Endothelial cell of umbilical vein (primary cell): ENCODE measurements at regions of chr12 and their contacts with region 1.

Region 1: DNA sequence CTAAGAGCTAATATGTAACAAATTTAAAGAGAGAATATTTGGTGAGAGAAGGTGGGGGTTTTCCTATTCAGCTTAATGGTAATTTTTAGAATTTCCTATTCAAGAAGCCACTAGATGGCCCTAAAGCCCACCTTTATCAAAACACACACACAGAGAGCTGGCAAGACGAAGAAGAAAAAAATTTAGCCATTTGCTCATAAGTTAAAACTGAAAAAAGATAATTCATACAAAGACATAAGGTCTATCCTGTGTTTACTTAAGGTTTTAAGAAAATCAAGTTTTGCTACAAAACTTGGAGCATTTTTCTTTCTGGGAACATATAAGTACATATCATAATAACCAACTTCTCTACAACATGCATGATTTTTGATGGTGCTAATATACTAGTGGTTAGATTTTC is 46.8 kb upstream of the PCED1B start:
- DNase-seq: peak; percentile 74
- H3K4me3 ChIP-seq: no peak overlapping the region
- H3K27ac ChIP-seq: no peak overlapping the region
- H3K4me1 ChIP-seq: no peaks in the 10 kb centered on the region
- H3K27me3 ChIP-seq: no peaks in the 10 kb centered on the region
- CTCF ChIP-seq: peak; percentile 17 to 25
- POLR2A ChIP-seq: no peak

Region 2: GRCh38 chr12:46915082-46915481 is 117.6 kb before region 1 on chr12:
- CTCF ChIA-PET with region 1: no interaction called
- POLR2A ChIA-PET with region 1: no interaction called
- dilution Hi-C with region 1: no loop called
- intact Hi-C with region 1: no loop called
- DNase-seq: no peak
- H3K4me3 ChIP-seq: no peak overlapping the region
- H3K27ac ChIP-seq: no peak overlapping the region
- H3K4me1 ChIP-seq: no peaks in the 10 kb centered on the region
- H3K27me3 ChIP-seq: peaks cover 2 to 4% of the 10 kb centered on the region in 2 experiments
- CTCF ChIP-seq: no peak
- POLR2A ChIP-seq: no peak

Region 3: DNA sequence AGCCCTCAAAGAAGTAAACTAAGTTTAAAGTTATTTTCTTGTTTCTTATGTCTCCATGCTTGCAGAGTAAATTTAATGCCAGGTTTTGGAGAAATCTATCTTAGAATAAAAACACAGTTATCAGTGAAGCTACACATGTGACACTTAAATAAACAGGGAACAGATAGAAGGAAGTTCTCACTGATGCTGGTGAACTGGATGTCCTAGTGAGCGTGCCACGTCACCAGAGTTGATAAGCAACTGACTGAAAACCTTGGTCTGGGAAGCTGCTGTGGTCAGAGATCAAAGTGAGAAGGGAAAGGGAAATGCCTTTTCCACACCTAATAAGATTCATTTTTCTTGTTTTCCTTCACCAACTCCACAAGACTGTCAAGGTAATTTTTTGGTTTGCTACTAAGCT is 28.0 kb before region 1 on chr12:
- CTCF ChIA-PET with region 1: no interaction called
- POLR2A ChIA-PET with region 1: no interaction called
- dilution Hi-C with region 1: no loop called
- intact Hi-C with region 1: no loop called
- DNase-seq: no peak
- H3K4me3 ChIP-seq: no peak overlapping the region
- H3K27ac ChIP-seq: no peak overlapping the region
- H3K4me1 ChIP-seq: no peaks in the 10 kb centered on the region
- H3K27me3 ChIP-seq: peaks cover 0 to 4% of the 10 kb centered on the region in 2 experiments
- CTCF ChIP-seq: no peak
- POLR2A ChIP-seq: no peak

Region 4: GRCh38 chr12:47071241-47071852 is 38.7 kb after region 1 on chr12:
- CTCF ChIA-PET with region 1: interaction called, 31 read pairs
- POLR2A ChIA-PET with region 1: no interaction called
- dilution Hi-C with region 1: no loop called
- intact Hi-C with region 1: no loop called
- DNase-seq: no peak
- H3K4me3 ChIP-seq: no peak overlapping the region
- H3K27ac ChIP-seq: no peak overlapping the region
- H3K4me1 ChIP-seq: no peaks in the 10 kb centered on the region
- H3K27me3 ChIP-seq: no peaks in the 10 kb centered on the region
- CTCF ChIP-seq: peak; percentile 26 to 45
- POLR2A ChIP-seq: no peak

Region 5: GRCh38 chr12:47079468-47079980 is 46.9 kb after region 1 on chr12 and contains the starts of genes AMIGO2 and PCED1B:
- CTCF ChIA-PET with region 1: interaction called, 31 read pairs
- POLR2A ChIA-PET with region 1: no interaction called
- dilution Hi-C with region 1: no loop called
- intact Hi-C with region 1: no loop called
- DNase-seq: peak; percentile 67
- H3K4me3 ChIP-seq: peak within 1 kb of the TSS; percentile 65 to 91 (median 78)
- H3K27ac ChIP-seq: peak within 1 kb of the TSS; percentile 97
- H3K4me1 ChIP-seq: peaks cover 13% of the 10 kb centered on the region
- H3K27me3 ChIP-seq: no peaks in the 10 kb centered on the region
- CTCF ChIP-seq: peak in 1 of 2 donors; percentile 18
- POLR2A ChIP-seq: no peak
- total RNA-seq, gene AMIGO2: 7.5 and 8.7 TPM in 2 replicates
- total RNA-seq, gene PCED1B: 1.5 and 2.6 TPM in 2 replicates

Region 6: DNA sequence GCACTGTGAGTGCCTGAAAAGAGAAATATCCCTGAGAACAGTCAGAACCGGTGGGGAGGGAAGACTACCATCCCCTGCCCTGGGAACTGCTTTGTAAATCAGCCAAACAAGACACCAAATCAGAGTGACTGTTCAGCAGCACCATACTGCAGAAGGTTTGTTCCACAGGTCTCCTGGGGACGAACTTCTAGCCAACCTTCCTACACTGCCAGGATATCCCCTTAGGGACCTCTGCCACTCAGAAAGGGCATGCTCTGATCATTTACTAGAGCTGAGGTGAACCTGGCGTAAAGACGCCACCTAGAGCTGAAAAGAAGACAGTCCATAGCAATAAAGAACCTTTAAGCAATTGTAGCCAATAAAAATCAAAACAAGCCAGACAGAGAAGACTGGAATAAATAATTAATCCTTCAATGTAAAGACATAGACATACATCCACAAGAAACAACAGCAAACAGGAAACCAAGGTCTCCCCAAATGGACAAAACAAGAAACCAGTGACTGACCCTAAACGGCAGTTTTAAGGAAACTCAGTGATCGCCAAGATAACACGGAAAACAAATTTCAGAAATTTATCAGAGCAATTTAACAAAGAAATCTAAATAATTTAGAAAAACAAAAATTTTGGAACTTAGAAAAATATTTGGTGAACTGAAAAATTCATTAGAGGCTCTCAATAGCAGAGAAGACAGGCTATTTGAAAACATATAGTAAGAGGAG is 275.2 kb after region 1 on chr12:
- CTCF ChIA-PET with region 1: interaction called, 83 read pairs
- POLR2A ChIA-PET with region 1: no interaction called
- dilution Hi-C with region 1: no loop called
- intact Hi-C with region 1: loop called (anchors 1 kb)
- DNase-seq: peak; percentile 66
- H3K4me3 ChIP-seq: no peak overlapping the region
- H3K27ac ChIP-seq: no peak overlapping the region
- H3K4me1 ChIP-seq: no peaks in the 10 kb centered on the region
- H3K27me3 ChIP-seq: no peaks in the 10 kb centered on the region
- CTCF ChIP-seq: peak; percentile 47 to 57
- POLR2A ChIP-seq: no peak

Region 7: GRCh38 chr12:47547085-47547484 is 514.4 kb after region 1 on chr12:
- CTCF ChIA-PET with region 1: interaction called, 12 read pairs
- POLR2A ChIA-PET with region 1: no interaction called
- dilution Hi-C with region 1: no loop called
- intact Hi-C with region 1: loop called (anchors 10 kb)
- DNase-seq: peak; percentile 69
- H3K4me3 ChIP-seq: no peak overlapping the region
- H3K27ac ChIP-seq: no peak overlapping the region
- H3K4me1 ChIP-seq: no peaks in the 10 kb centered on the region
- H3K27me3 ChIP-seq: peaks cover 3 to 4% of the 10 kb centered on the region in 2 experiments
- CTCF ChIP-seq: peak; percentile 40 to 46
- POLR2A ChIP-seq: no peak

Region 8: DNA sequence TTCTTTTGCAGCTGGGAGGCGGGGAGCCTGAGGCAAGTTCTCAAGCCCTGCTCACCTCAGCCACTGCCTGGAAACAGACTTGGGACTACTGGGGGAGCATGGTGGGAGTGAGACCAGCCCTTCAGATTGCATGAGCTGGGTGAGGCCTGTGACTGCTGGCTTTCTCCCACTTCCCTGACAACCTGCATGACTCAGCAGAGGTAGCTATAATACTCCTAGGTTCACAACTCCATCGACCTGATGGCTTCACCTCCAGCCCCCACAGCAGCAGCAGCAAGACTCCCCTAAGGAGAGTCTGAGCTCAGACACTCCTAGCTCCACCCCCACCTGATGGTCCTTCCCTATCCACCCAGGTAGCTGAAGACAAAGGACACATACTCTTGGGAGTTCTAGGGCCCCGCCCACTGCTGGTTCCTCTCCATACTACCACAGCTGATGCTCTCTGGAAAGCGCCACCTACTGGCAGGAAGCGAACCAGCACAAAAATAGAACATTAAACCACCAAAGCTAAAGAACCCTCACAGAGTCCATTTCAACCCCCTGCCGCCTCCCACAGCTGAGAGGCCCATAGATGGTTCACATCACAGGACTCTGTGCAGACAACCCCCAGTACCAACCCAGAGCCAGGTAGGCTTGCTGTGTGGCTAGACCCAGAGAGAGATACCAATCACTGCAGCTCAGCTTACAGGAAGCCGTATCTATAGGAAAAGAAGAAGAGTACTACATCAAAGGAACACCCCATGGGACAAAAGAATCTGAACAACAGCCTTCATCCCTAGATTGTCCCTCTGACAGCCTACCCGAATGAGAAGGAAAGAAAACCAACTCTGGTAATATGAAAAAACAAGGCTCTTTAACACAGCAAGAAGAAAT is 604.5 kb after region 1 on chr12:
- CTCF ChIA-PET with region 1: interaction called, 45 read pairs
- POLR2A ChIA-PET with region 1: no interaction called
- dilution Hi-C with region 1: no loop called
- intact Hi-C with region 1: loop called (anchors 1 kb)
- DNase-seq: no peak
- H3K4me3 ChIP-seq: no peak overlapping the region
- H3K27ac ChIP-seq: no peak overlapping the region
- H3K4me1 ChIP-seq: no peaks in the 10 kb centered on the region
- H3K27me3 ChIP-seq: no peaks in the 10 kb centered on the region
- CTCF ChIP-seq: peak; percentile 60 to 68
- POLR2A ChIP-seq: no peak

Region 9: GRCh38 chr12:47686645-47687240 is 654.1 kb after region 1 on chr12:
- CTCF ChIA-PET with region 1: interaction called, 49 read pairs
- POLR2A ChIA-PET with region 1: no interaction called
- dilution Hi-C with region 1: no loop called
- intact Hi-C with region 1: loop called (anchors 1 kb)
- DNase-seq: peak; percentile 54
- H3K4me3 ChIP-seq: no peak overlapping the region
- H3K27ac ChIP-seq: no peak overlapping the region
- H3K4me1 ChIP-seq: no peaks in the 10 kb centered on the region
- H3K27me3 ChIP-seq: no peaks in the 10 kb centered on the region
- CTCF ChIP-seq: peak; percentile 20 to 61
- POLR2A ChIP-seq: no peak